ENCODE measurements at regions of chr7 and their contacts with region 1.

Region 1: DNA sequence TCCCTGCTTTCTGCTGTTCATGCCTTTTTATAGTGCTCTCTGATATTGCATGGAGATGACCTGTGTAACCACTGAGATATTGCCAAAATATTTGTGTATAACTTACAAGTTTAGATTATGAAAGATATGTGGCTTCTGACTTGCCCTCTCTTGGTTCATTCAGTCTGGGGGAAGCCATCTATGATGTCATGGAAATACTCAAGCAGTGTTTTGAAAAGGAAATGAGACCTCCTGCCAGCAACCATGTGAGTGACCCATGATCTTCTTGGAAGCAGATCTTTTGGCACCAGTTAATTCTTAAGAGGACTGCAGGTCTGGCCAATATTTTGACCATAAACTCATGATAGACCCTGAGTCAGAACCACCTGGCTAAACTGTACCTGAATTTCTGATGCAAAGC is 183.0 kb downstream of the THSD7A start:
- DNase-seq: no peak
- ATAC-seq: no peak
- H3K4me3 ChIP-seq: no peak overlapping the region
- H3K27ac ChIP-seq: no peak overlapping the region
- H3K4me1 ChIP-seq: no peaks in the 10 kb centered on the region
- H3K27me3 ChIP-seq: no peaks in the 10 kb centered on the region
- CTCF ChIP-seq: no peak

Region 2: GRCh38 chr7:11758627-11759111 is 109.7 kb after region 1 on chr7:
- CTCF ChIA-PET with region 1: no interaction called
- POLR2A ChIA-PET with region 1: interaction called, 11 read pairs
- in situ Hi-C with region 1: no loop called
- intact Hi-C with region 1: no loop called
- DNase-seq: no peak
- ATAC-seq: no peak
- H3K4me3 ChIP-seq: no peak overlapping the region
- H3K27ac ChIP-seq: peak overlapping the region; percentile 90
- H3K4me1 ChIP-seq: peaks cover 43% of the 10 kb centered on the region
- H3K27me3 ChIP-seq: no peaks in the 10 kb centered on the region
- CTCF ChIP-seq: no peak

Region 3: DNA sequence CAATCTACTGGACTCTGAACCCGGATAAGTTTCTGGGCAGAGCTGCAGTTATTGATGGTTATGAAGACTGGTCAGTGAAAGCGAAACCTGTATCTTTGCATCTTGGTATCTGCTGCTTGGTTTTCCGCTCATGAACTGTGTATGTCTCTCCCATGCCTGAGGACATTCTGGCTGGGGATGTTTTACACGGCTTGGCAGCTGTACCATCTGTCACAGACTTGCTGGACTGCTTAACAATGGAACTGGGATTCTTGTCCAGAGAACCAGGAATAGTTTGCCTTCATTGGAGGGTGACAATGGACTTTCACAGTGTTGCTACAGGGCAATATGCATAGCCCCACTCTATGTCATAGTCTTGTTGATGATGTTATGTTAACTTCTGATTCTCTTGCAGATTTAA is 442.3 kb after region 1 on chr7:
- CTCF ChIA-PET with region 1: interaction called, 12 read pairs
- POLR2A ChIA-PET with region 1: no interaction called
- in situ Hi-C with region 1: no loop called
- intact Hi-C with region 1: no loop called
- DNase-seq: no peak
- ATAC-seq: peak; percentile 22; the same call in 1 of the 2 replicates
- H3K4me3 ChIP-seq: no peak overlapping the region
- H3K27ac ChIP-seq: peak overlapping the region; percentile 18; the same call in 1 of the 2 replicates
- H3K4me1 ChIP-seq: peaks cover 7% of the 10 kb centered on the region; the same call in 1 of the 2 replicates
- H3K27me3 ChIP-seq: no peaks in the 10 kb centered on the region
- CTCF ChIP-seq: no peak

Measured in Panc1 (cell line).